ENCODE measurements at regions of chr17 and their contacts with region 1.

Region 1: DNA sequence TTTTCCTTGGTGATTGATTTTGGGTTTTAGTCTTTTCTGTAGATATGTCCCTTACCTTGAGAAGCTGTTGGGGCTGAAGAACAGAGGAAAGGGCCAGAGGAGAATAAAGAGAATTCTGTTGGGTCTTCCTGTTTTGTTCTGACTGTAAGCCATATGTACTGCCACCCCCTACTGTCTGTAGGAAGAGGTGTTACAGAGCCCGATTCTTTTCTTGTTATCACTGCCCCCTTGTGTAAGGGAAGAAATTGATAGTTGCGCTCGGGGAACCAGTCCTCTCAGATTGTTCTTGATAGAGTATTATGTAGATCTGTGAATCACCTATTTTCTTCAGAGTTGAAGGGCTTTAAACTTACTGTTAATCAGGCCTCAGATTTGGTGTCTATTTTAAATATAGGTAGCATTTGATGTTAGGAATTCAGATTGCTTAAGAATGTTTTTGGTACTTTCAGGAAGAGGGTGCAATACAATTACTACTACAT is 2.4 kb downstream of the TANC2 start:
- DNase-seq: peak; percentile 24
- ATAC-seq: peak; percentile 96
- H3K4me3 ChIP-seq: no peak overlapping the region
- H3K27ac ChIP-seq: no peak overlapping the region
- H3K4me1 ChIP-seq: peaks cover 8% of the 10 kb centered on the region
- H3K27me3 ChIP-seq: peaks cover 3 to 12% of the 10 kb centered on the region in 2 experiments
- CTCF ChIP-seq: peak; percentile 75 to 96 (median 87)
- EP300 ChIP-seq: no peak
- POLR2A ChIP-seq: no peak
- RAD21 ChIP-seq: peak; percentile 74

Region 2: GRCh38 chr17:62671583-62672312 is 296.7 kb before region 1 on chr17:
- CTCF ChIA-PET with region 1: no interaction called
- POLR2A ChIA-PET with region 1: no interaction called
- RAD21 ChIA-PET with region 1: interaction called, 3 read pairs
- SMC1A ChIA-PET with region 1: no interaction called
- in situ Hi-C with region 1: no loop called
- intact Hi-C with region 1: loop called (anchors 1 kb)
- DNase-seq: no peak
- ATAC-seq: no peak; the same call in 2 of the 3 replicates
- H3K4me3 ChIP-seq: no peak overlapping the region
- H3K27ac ChIP-seq: no peak overlapping the region
- H3K4me1 ChIP-seq: no peaks in the 10 kb centered on the region
- H3K27me3 ChIP-seq: no peaks in the 10 kb centered on the region; a peak in 1 of 4 replicates
- CTCF ChIP-seq: no peak
- EP300 ChIP-seq: no peak
- POLR2A ChIP-seq: no peak
- RAD21 ChIP-seq: no peak

Region 3: GRCh38 chr17:62703775-62704378 is 264.6 kb before region 1 on chr17:
- CTCF ChIA-PET with region 1: no interaction called
- POLR2A ChIA-PET with region 1: no interaction called
- RAD21 ChIA-PET with region 1: no interaction called
- SMC1A ChIA-PET with region 1: interaction called, 4 read pairs
- in situ Hi-C with region 1: no loop called
- intact Hi-C with region 1: loop called (anchors 1 kb)
- DNase-seq: no peak
- ATAC-seq: peak; percentile 98
- H3K4me3 ChIP-seq: peak overlapping the region; percentile 49; the same call in 1 of the 2 replicates
- H3K27ac ChIP-seq: no peak overlapping the region
- H3K4me1 ChIP-seq: no peaks in the 10 kb centered on the region
- H3K27me3 ChIP-seq: peaks cover 2 to 8% of the 10 kb centered on the region in 2 experiments; a peak in 2 of 4 replicates
- CTCF ChIP-seq: peak; percentile 67 to 92 (median 84)
- EP300 ChIP-seq: no peak
- POLR2A ChIP-seq: no peak
- RAD21 ChIP-seq: peak; percentile 80

Region 4: GRCh38 chr17:62714016-62714746 is 254.3 kb before region 1 on chr17:
- CTCF ChIA-PET with region 1: no interaction called
- POLR2A ChIA-PET with region 1: no interaction called
- RAD21 ChIA-PET with region 1: no interaction called
- SMC1A ChIA-PET with region 1: no interaction called
- in situ Hi-C with region 1: loop called (anchors 5 kb)
- intact Hi-C with region 1: no loop called
- DNase-seq: no peak
- ATAC-seq: no peak
- H3K4me3 ChIP-seq: no peak overlapping the region
- H3K27ac ChIP-seq: no peak overlapping the region
- H3K4me1 ChIP-seq: no peaks in the 10 kb centered on the region
- H3K27me3 ChIP-seq: no peaks in the 10 kb centered on the region
- CTCF ChIP-seq: no peak
- EP300 ChIP-seq: no peak
- POLR2A ChIP-seq: no peak
- RAD21 ChIP-seq: no peak

Region 5: GRCh38 chr17:62724398-62725146 is 243.9 kb before region 1 on chr17:
- CTCF ChIA-PET with region 1: no interaction called
- POLR2A ChIA-PET with region 1: no interaction called
- RAD21 ChIA-PET with region 1: no interaction called
- SMC1A ChIA-PET with region 1: no interaction called
- in situ Hi-C with region 1: no loop called
- intact Hi-C with region 1: loop called (anchors 5 kb)
- DNase-seq: peak; percentile 91
- ATAC-seq: peak; percentile 96
- H3K4me3 ChIP-seq: no peak overlapping the region
- H3K27ac ChIP-seq: peak overlapping the region; percentile 7; the same call in 1 of the 2 replicates
- H3K4me1 ChIP-seq: peaks cover 15% of the 10 kb centered on the region
- H3K27me3 ChIP-seq: no peaks in the 10 kb centered on the region
- CTCF ChIP-seq: no peak
- EP300 ChIP-seq: peak in 1 of 2 experiments; percentile 61; a peak in 1 of 4 replicates
- POLR2A ChIP-seq: no peak
- RAD21 ChIP-seq: 0 out of 2 replicates have a peak, but pooled peaks have one; percentile 12